Vagina (tissue), 2 donors: ENCODE measurements at regions of chr9 and their contacts with region 1.

Region 1: DNA sequence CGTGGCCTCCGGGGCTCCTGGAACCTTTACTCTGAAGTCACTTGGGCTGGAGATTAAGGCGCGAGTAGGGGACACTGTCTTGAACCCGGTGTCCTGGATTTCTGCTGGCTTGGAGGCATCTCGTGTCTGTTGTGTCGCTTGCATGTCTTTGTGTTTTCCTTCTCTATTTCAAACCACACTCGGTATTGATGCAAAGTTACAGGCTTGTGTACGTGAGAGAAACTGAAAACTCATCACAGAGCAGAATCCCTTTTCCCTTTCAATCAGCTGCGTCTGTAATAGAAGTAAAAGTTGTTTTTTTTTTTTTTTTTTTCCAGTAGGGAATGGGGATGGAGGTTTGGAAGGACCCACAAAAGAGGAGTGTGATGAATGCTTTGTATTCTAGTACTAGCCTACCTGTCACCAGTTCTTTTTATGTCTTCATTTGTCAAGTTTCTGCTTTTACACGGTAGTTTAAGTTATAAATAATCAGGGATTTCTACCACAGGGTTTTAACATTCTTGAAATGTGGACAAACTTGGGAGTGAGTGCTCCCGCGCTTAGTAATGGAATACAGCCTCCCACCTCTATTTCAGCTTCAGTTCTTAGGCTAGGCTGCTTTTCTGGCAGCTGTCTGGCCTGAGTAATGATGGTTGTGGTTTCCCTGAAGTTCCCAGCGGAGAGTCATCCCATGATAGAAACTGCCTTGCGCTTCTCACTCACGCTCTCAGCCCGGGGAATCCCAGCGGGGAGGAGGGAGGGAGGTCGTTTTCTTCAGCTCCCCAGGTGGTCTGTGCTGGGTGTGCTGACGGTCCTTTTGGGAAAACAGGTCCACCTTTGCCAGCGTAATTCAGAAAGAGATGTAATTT is 763 bp downstream of the TJP2 start:
- DNase-seq: no peak
- H3K4me3 ChIP-seq: peak overlapping the region; percentile 59 to 63
- H3K27ac ChIP-seq: peak overlapping the region; percentile 46
- H3K4me1 ChIP-seq: peaks cover 44% of the 10 kb centered on the region
- H3K27me3 ChIP-seq: no peaks in the 10 kb centered on the region
- CTCF ChIP-seq: no peak
- POLR2A ChIP-seq: no peak

Region 2: GRCh38 chr9:68966496-68966944 is 208.3 kb before region 1 on chr9:
- intact Hi-C with region 1: no loop called
- DNase-seq: no peak
- H3K4me3 ChIP-seq: no peak overlapping the region
- H3K27ac ChIP-seq: no peak overlapping the region
- H3K4me1 ChIP-seq: no peaks in the 10 kb centered on the region
- H3K27me3 ChIP-seq: no peaks in the 10 kb centered on the region
- CTCF ChIP-seq: no peak
- POLR2A ChIP-seq: no peak

Region 3: GRCh38 chr9:69131682-69132081 is 43.2 kb before region 1 on chr9:
- intact Hi-C with region 1: loop called (anchors 5 kb)
- DNase-seq: peak in 1 of 2 donors; percentile 61
- H3K4me3 ChIP-seq: no peak overlapping the region
- H3K27ac ChIP-seq: peak overlapping the region; percentile 20
- H3K4me1 ChIP-seq: peaks cover 18% of the 10 kb centered on the region
- H3K27me3 ChIP-seq: no peaks in the 10 kb centered on the region
- CTCF ChIP-seq: no peak
- POLR2A ChIP-seq: no peak